Left cardiac atrium (tissue), 4 donors: ENCODE measurements at regions of chr5 and their contacts with region 1.

Region 1: DNA sequence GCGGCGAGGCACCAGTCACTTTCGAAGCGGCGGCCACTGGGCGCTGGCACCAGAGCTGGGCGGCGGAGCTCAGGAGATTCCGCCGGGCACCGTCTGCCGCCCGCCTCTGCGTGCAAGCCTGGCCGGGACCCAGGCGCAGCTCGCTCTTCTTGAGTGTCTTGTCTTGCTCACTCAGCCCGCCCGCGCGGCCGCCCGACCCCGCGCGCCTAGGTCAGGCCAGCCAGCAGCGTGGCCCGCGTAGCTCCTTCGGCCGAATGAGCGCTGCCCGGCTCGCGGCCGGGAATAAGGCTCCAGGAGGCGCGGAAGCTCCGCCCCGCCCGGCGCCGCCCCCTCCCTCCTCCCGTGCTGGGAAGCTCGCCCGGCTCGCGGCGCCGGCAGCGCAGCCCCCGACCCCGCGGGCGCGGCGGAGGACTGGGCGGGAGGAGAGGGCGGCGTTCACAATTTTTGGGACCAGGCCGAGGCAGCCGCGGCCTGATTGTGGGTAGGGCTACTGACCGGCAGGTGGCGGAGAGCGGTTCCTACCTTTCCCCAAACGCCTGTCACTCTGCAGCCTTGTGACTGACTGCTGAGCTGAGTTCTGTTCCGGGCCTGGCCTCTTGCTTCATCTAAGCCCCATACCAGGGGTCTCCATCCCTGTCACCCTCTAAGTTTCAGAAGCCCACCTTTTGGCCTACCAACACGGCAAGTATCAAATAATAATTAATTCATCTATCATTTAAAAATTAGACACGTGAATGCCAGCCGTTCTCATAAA is at the start of gene HBEGF:
- DNase-seq: peak; percentile 86
- ATAC-seq: peak; percentile 89
- total RNA-seq, gene HBEGF: 12.9 to 18.3 TPM

Region 2: GRCh38 chr5:140207250-140207964 is 139.1 kb before region 1 on chr5:
- intact Hi-C with region 1: no loop called
- DNase-seq: no peak
- ATAC-seq: no peak

Region 3: DNA sequence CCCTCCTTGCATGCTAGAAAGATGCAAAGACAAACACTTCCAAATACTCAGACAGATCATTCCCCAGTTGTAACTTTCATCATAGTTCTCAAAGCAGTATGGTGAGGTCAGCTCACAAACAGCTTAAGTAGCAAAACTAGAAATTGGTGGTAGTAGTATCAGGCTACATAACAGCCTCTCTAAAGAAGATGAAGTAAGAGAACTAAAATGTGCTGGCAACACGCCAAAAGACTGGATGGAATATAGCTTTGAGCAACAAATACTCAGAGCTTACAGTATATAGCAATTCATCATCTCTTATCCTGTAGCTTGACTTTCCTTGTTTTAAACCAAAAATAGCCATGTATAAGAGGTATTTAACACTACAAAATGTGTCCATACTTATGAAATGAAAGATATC is 51.1 kb before region 1 on chr5:
- intact Hi-C with region 1: loop called (anchors 10 kb)
- DNase-seq: peak; percentile 55
- ATAC-seq: peak; percentile 81 to 88

Region 4: GRCh38 chr5:140690941-140691924 is 344.7 kb after region 1 on chr5 and contains the starts of genes HARS1 and HARS2:
- intact Hi-C with region 1: no loop called
- DNase-seq: peak; percentile 93
- ATAC-seq: peak; percentile 98
- total RNA-seq, gene HARS1: 35.3 to 46.5 TPM
- total RNA-seq, gene HARS2: 19.2 TPM